Heart left ventricle (tissue), 16 donors: ENCODE measurements at regions of chr4 and their contacts with region 1.

Region 1: DNA sequence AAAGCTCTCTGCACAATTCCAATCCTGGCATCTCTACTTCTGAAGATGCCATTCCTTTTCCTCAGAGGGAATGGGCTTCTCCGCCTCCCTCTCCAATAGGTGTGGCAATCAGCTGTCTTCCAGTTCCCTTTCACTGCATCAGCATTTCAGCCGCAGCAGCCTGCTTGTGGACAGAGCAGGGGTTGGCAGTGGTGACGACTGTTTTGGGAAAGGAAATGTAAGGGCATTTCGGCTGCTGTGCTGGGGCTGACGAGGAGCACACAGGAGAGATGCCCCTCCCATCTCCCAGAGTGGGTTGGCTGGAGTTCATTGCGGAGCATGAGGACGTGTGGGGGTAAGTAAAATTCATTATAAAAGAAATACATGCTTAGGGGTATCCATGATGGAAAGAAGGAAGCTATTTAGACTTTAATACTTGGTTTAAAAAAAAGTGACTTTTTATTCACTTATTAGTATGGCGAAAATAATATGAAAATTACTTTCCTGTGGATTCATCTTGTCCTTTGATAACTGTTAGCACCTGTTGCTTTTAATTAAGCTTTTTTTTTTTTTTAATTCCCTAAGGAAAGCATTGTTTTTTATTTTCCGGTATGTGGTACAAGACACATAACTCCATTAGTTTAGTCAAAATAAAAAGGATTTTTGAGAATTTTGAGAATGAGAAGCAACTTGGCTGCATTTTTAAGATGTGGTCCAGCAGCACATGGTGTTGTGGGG is at the start of gene LIMCH1:
- DNase-seq: peak; percentile 79 to 90 (median 81)
- ATAC-seq: peak; percentile 82 to 92 (median 86)
- H3K4me3 ChIP-seq: peak within 1 kb of the TSS; percentile 7 to 51 (median 33)
- H3K27ac ChIP-seq: peak within 1 kb of the TSS; percentile 75 to 95 (median 88)
- H3K4me1 ChIP-seq: peaks cover 0 to 99% (median 79%) of the 10 kb centered on the region in 12 donors
- H3K27me3 ChIP-seq: no peaks in the 10 kb centered on the region
- CTCF ChIP-seq: no peak
- POLR2A ChIP-seq: no peak
- total RNA-seq, gene LIMCH1: 169 to 345 (median 247) TPM

Region 2: DNA sequence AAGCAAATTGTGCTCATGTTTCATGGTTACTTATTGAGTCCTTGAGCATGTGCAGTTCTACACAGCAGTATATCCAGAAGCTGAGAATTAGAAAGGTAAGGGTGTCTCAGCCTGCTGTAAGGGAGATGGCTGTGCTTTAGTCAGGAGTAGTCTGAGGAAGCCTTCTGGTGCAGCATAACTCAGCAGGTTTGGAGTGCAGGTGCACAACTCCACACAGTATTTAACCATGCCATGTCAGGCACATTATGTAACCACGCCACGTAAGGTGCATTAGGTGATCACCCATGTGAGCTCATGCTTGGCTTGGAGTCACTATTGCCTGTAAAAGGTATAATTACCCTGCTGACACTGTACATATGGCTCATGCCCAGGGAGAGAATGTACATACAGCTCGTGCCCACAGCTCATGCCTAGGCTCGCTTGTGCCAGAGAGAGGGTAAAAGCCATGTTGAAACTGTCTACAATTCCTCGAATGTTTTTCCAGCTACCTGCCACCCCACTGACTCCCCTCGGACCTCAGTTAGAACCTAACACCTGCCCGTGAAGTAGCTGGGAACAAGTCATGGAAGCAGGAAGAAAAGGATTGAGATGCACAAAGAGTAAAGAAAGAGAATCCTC is 243.6 kb before region 1 on chr4:
- intact Hi-C with region 1: loop called in 2 of 10 experiments (anchors 10 kb)
- DNase-seq: no peak
- ATAC-seq: no peak
- H3K4me3 ChIP-seq: no peak overlapping the region
- H3K27ac ChIP-seq: no peak overlapping the region
- H3K4me1 ChIP-seq: peaks cover 0 to 13% (median 0%) of the 10 kb centered on the region in 12 donors
- H3K27me3 ChIP-seq: no peaks in the 10 kb centered on the region
- CTCF ChIP-seq: no peak
- POLR2A ChIP-seq: no peak

Region 3: DNA sequence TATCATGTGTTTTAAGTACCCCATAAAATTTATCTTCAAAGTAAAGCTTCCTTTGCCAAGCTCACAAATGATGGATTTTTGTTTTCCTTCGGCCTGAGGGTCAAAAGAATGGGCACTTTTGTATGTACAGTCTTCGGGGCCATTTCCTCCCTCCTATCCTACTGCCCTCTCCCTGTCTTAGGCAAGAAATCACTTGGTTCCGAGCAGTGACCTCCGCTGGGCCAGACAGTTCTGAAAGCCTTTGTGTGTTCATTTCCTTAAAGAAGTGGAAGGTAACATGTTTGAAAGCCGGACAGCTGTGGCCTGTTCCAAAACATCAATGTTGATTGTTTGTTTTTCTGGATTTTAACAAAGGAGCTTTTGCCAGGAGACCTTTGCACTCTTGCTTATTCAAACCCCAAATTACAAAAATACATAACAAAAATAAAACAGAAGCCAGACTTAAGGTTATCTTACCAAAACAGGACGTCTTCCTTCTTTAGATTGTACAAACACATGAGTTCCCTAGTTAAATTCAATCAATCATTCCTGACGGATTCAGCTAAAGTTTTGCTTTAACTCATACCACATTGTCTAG is 110.8 kb before region 1 on chr4:
- intact Hi-C with region 1: loop called in 3 of 10 experiments (anchors 5 to 10 kb)
- DNase-seq: no peak
- ATAC-seq: peak in 3 of 4 donors; percentile 15 to 61 (median 52)
- H3K4me3 ChIP-seq: no peak overlapping the region
- H3K27ac ChIP-seq: peak overlapping the region in 11 of 12 donors; percentile 16 to 93 (median 67)
- H3K4me1 ChIP-seq: peaks cover 5 to 89% (median 60%) of the 10 kb centered on the region in 12 donors
- H3K27me3 ChIP-seq: no peaks in the 10 kb centered on the region
- CTCF ChIP-seq: no peak
- POLR2A ChIP-seq: no peak

Region 4: DNA sequence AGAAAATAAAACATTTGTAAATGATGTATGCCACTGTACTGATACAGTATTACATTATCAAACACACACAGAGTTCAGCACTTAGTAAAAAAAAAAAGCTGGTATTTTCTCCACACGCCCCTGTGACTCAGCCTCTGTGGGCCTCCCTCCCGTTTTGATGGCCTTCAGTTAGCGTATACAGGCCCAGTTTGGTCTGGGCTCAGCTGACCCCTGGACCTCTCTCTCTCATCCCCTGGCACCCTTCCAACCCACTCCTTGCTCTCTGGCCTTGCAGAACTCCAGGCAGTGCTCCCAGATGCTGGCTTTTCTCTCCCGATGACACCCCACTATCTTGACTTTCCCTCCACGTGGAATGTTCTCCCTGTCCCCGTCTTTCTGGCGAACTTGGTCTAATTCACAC is 89.2 kb before region 1 on chr4:
- intact Hi-C with region 1: loop called in 1 of 10 experiments (anchors 10 kb)
- DNase-seq: peak in 4 of 5 donors; percentile 62 to 72 (median 67)
- ATAC-seq: peak; percentile 52 to 84 (median 76)
- H3K4me3 ChIP-seq: no peak overlapping the region
- H3K27ac ChIP-seq: peak overlapping the region in 3 of 12 donors; percentile 25 to 33 (median 27)
- H3K4me1 ChIP-seq: peaks cover 0 to 60% (median 25%) of the 10 kb centered on the region in 12 donors
- H3K27me3 ChIP-seq: no peaks in the 10 kb centered on the region
- CTCF ChIP-seq: no peak
- POLR2A ChIP-seq: no peak

Region 5: GRCh38 chr4:41611881-41612871 is 74.0 kb after region 1 on chr4:
- intact Hi-C with region 1: loop called in 2 of 10 experiments (anchors 2 to 5 kb)
- DNase-seq: peak; percentile 68 to 79 (median 73)
- ATAC-seq: peak; percentile 89 to 93 (median 92)
- H3K4me3 ChIP-seq: peak overlapping the region in 7 of 12 donors; percentile 21 to 52 (median 29)
- H3K27ac ChIP-seq: peak overlapping the region; percentile 7 to 83 (median 68)
- H3K4me1 ChIP-seq: peaks cover 0 to 43% (median 32%) of the 10 kb centered on the region in 12 donors
- H3K27me3 ChIP-seq: no peaks in the 10 kb centered on the region
- CTCF ChIP-seq: peak in 2 of 12 donors; percentile 15 to 22
- POLR2A ChIP-seq: no peak